BJ (cell line): ENCODE measurements at regions of chr12 and their contacts with region 1.

Region 1: GRCh38 chr12:49014547-49014946 is 4.0 kb downstream of the PRKAG1 start:
- DNase-seq: no peak
- H3K4me3 ChIP-seq: no peak overlapping the region
- H3K27me3 ChIP-seq: no peaks in the 10 kb centered on the region
- CTCF ChIP-seq: peak; percentile 41

Region 2: DNA sequence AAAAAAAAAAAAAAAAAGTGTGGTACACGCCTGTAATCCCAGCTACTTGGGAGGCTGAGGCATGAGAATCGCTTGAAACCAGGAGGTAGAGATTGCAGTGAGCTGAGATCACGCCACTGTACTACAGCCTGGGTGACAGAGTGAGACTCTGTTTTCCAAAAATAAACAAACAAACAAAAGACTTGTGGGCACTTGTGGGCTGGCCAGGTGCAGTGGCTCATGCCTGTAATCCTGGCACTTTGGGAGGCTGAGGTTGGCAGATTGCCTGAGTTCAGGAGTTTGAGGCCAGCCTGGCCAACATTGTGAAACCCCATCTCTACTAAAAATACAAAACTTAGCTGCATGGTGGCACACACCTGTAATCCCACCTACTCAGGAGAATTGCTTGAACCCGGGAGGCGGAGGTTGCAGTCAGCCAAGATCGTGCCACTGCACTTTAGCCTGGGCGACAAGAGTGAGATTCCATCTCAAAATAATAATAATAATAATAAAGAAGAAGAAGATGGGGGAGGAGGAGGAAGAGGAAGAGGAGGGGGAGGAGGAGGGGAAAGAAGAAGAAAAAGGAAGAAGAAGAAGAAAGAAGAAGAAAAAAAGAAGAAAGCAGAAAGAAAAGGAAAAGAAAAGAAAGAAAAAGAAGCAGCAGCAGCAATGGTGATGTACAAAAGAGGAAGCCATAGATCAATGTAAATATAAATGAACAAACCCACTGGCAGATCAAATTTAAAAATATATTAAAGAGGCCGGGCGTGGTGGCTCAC is 270.1 kb before region 1 on chr12:
- CTCF ChIA-PET with region 1: no interaction called
- POLR2A ChIA-PET with region 1: no interaction called
- DNase-seq: no peak
- H3K4me3 ChIP-seq: no peak overlapping the region
- H3K27me3 ChIP-seq: no peaks in the 10 kb centered on the region
- CTCF ChIP-seq: no peak

Region 3: DNA sequence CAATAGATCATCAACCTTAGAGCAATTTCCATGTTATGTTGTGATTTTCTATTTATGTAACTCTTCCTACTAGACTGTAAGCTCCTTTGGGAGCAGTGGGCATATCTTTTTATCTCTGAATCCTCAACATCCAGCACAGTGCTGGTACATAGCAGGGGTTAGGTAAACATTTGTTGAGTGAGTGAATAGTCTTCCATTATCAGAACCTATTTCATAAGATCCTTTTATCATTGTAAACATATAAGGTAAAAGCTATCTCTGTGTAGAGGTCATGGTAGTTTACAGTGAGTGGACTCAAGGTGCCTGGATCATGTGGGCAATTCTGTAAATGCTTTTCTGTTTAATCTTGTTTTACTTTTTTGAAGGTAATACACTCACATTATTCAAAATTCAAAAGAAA is 104.4 kb before region 1 on chr12:
- CTCF ChIA-PET with region 1: interaction called, 5 read pairs
- POLR2A ChIA-PET with region 1: interaction called, 17 read pairs
- DNase-seq: no peak
- H3K4me3 ChIP-seq: no peak overlapping the region
- H3K27me3 ChIP-seq: no peaks in the 10 kb centered on the region
- CTCF ChIP-seq: no peak

Region 4: DNA sequence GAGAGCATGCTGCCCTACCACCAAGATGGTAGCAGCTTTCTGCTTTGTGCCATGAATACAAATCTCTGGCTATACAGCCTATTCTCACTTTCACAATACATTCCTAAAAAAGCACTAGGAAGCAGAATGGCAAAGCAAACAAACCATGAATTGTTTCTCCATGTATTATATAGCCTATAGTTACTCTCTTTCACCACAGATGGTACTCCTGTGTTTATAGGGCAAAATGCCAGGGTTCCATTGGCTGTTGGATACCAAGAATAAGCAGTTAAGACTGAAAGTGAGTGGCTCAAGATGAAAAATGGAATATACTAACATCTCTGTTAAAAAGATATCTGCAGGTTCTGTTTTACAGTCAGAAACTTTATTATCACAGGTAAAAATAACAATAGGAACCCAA is 68.3 kb before region 1 on chr12:
- CTCF ChIA-PET with region 1: no interaction called
- POLR2A ChIA-PET with region 1: no interaction called
- DNase-seq: no peak
- H3K4me3 ChIP-seq: no peak overlapping the region
- H3K27me3 ChIP-seq: no peaks in the 10 kb centered on the region
- CTCF ChIP-seq: no peak

Region 5: GRCh38 chr12:48988030-48988649 is 26.4 kb before region 1 on chr12:
- CTCF ChIA-PET with region 1: interaction called, 16 read pairs
- POLR2A ChIA-PET with region 1: no interaction called
- DNase-seq: no peak
- H3K4me3 ChIP-seq: no peak overlapping the region
- H3K27me3 ChIP-seq: peaks cover 37% of the 10 kb centered on the region
- CTCF ChIP-seq: peak; percentile 90

Region 6: GRCh38 chr12:48995061-48995879 is 19.3 kb before region 1 on chr12:
- CTCF ChIA-PET with region 1: interaction called, 20 read pairs
- POLR2A ChIA-PET with region 1: no interaction called
- DNase-seq: no peak
- H3K4me3 ChIP-seq: no peak overlapping the region
- H3K27me3 ChIP-seq: peaks cover 9% of the 10 kb centered on the region
- CTCF ChIP-seq: peak; percentile 83

Region 7: DNA sequence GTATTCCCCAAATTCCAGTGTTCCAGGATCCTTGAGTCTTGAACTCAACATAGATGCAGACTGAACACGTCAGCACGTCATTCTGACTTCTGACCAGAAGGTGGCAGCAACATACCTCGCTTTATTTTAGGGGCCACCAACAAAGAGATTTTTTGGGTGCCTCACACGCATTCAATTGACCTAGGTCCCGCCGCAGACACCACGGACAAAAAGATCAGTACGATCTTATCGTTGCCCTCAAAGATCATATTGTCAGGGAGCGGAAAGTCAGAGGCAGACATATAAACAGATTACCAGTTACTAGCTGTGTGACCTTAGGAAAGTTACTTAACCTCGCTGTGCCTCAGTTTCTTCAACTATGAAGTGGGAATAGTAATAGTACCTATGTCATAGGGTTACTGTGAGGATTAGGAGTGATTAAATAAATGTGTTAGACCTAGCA is 273.9 kb after region 1 on chr12:
- CTCF ChIA-PET with region 1: no interaction called
- POLR2A ChIA-PET with region 1: no interaction called
- DNase-seq: no peak
- H3K4me3 ChIP-seq: no peak overlapping the region
- H3K27me3 ChIP-seq: peaks cover 8% of the 10 kb centered on the region
- CTCF ChIP-seq: peak; percentile 82